Activated naive CD4-positive, alpha-beta T cell treated with anti-CD3 and anti-CD28 coated beads for 36 hours (primary cell): ENCODE measurements at regions of chr14 and their contacts with region 1.

Region 1: GRCh38 chr14:103518422-103519042 is 4.1 kb downstream of the CKB start:
- DNase-seq: peak; percentile 66
- H3K4me3 Mint-ChIP-seq: no peak overlapping the region
- H3K27ac Mint-ChIP-seq: no peak overlapping the region
- H3K4me1 Mint-ChIP-seq: peaks cover 4% of the 10 kb centered on the region
- H3K27me3 Mint-ChIP-seq: peaks cover 5% of the 10 kb centered on the region

Region 2: GRCh38 chr14:103528587-103529382 is 10.3 kb after region 1 on chr14 and contains the start of gene TRMT61A:
- CTCF ChIA-PET with region 1: interaction called, 13 read pairs
- intact Hi-C with region 1: no loop called
- DNase-seq: peak; percentile 79
- H3K4me3 Mint-ChIP-seq: peak within 1 kb of the TSS; percentile 97
- H3K27ac Mint-ChIP-seq: peak within 1 kb of the TSS; percentile 87
- H3K4me1 Mint-ChIP-seq: peaks cover 34% of the 10 kb centered on the region
- H3K27me3 Mint-ChIP-seq: peaks cover under 1% of the 10 kb centered on the region
- total RNA-seq, gene TRMT61A: 6.6 to 6.7 TPM